Activated T-helper 2 cell treated with anti-CD3 and anti-CD28 coated beads, Interferon-gamma antibody, Interleukin-2, Interleukin-4, amounts not matched to agents 10 μg/mL and 5 μg/mL and 100 μg/mL, durations not matched to agents 14 hours and 24 hours and 36 hours (primary cell): ENCODE measurements at regions of chr11 and their contacts with region 1.

Region 1: DNA sequence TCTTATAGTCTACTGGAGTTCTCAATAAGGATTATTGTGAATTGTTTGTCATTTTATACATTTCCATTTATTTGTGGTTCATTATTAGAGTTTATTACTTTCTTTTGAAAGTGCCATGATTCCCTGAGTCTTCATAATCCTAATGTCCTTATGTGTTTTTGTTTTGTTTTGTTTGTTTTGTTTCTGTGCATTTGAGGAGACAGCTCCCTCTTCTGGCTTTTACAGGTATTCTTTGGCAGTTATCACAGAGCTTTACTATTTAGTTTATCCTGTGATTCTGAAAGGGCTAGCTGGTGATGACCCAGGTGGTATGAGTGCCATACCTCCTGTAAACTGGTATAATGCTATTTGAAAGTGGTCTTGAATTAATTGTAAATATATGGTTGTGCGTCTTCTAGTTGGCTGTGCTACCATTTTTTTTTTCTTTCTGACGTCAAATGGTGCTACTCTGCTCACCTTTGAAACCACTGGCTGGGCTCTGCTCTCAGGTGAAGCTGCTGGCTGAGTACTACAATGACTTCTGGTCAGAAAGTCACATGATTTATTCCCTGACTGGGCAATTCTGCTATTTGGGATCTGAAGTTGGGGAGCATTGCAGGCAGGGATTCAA is 751.2 kb downstream of the JRKL start:
- DNase-seq: no peak
- H3K4me3 Mint-ChIP-seq: no peak overlapping the region
- H3K27ac Mint-ChIP-seq: no peak overlapping the region
- H3K4me1 Mint-ChIP-seq: no peaks in the 10 kb centered on the region
- H3K27me3 Mint-ChIP-seq: no peaks in the 10 kb centered on the region

Region 2: DNA sequence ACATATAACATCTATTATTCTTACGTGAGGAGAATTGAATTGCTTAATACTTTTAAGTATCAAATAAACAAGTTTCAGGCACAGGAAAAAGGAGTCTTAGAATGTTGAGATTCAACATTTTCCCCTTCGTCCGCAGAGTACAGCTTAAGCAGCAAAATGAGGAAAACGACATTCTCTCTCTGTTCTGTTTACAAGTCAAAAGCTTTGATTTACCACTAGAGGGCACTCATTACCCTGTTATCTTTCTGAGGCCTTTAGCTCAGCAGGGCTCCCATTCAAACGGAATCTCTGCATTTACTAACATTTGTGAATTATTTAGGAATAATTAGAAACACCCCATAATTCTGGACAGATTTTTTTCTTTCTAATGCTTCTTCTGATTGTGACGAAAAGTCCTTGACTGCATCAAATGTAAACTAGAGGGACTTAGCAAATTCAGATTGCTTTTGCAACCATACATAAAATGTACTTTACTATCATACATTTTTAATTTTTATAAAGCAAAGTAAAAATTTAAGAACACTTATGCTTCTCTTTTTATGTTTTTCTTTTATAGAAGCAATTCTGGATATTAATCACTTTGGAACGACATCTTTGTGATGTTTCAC is 676.2 kb before region 1 on chr11:
- intact Hi-C with region 1: loop called (anchors 2 kb)
- DNase-seq: no peak
- H3K4me3 Mint-ChIP-seq: no peak overlapping the region
- H3K27ac Mint-ChIP-seq: no peak overlapping the region
- H3K4me1 Mint-ChIP-seq: no peaks in the 10 kb centered on the region
- H3K27me3 Mint-ChIP-seq: peaks cover 7% of the 10 kb centered on the region

Region 3: DNA sequence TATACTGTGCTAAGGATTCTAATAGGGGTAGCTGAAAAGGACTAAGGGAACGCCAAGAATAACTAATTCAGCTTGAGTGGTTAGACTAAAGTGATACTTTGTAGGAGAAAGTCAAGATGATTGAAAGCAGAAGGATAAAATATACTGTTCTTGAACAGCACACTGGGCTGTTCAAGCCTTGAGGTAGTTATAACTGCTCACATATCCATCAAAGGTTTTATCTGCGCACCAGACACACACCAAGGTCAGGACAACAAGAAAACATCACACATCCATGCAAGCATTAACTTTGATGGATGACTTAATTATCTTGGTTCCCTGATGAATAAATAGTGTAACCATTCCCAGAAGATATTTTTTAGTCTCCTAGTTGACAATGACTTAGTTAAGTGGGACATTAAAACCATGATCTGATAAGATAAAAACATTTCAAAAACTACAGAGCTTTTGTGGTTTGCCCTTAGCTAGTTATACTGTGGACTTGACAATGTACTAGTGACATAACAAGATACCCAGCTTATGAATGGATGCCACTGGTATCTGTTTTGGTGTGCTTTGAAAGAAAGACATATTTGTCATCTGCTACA is 22.3 kb before region 1 on chr11:
- intact Hi-C with region 1: no loop called
- DNase-seq: no peak
- H3K4me3 Mint-ChIP-seq: no peak overlapping the region
- H3K27ac Mint-ChIP-seq: no peak overlapping the region
- H3K4me1 Mint-ChIP-seq: no peaks in the 10 kb centered on the region
- H3K27me3 Mint-ChIP-seq: no peaks in the 10 kb centered on the region

Region 4: DNA sequence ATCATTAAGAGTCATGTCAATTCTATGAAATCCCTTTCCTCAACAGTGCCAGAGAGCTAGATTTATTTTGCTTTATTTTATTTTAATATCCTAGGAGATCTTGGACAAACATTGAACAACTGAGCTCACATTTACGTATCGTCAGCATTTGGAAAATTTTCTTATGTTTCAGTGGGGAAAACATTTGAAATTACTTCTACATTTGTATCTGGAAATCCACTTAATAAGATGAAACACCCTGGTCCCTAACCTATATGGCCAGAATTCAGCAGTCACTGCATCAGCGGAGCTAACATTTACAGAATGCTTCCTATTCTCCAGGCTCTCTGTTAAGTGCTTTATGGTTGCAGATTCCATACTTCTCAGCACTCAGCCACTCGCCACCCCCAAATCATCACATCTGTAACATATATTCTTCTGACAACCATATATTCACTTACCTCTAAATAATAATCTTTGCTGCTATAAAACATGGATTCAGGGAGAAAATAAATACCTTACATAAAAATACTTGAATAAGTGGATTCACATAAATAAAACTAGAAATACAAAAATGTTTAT is 22.7 kb after region 1 on chr11:
- intact Hi-C with region 1: loop called (anchors 2 kb)
- DNase-seq: no peak
- H3K4me3 Mint-ChIP-seq: no peak overlapping the region
- H3K27ac Mint-ChIP-seq: no peak overlapping the region
- H3K4me1 Mint-ChIP-seq: no peaks in the 10 kb centered on the region
- H3K27me3 Mint-ChIP-seq: no peaks in the 10 kb centered on the region